Left ventricle myocardium inferior (tissue), 1 donor: ENCODE measurements at regions of chr10 and their contacts with region 1.

Region 1: DNA sequence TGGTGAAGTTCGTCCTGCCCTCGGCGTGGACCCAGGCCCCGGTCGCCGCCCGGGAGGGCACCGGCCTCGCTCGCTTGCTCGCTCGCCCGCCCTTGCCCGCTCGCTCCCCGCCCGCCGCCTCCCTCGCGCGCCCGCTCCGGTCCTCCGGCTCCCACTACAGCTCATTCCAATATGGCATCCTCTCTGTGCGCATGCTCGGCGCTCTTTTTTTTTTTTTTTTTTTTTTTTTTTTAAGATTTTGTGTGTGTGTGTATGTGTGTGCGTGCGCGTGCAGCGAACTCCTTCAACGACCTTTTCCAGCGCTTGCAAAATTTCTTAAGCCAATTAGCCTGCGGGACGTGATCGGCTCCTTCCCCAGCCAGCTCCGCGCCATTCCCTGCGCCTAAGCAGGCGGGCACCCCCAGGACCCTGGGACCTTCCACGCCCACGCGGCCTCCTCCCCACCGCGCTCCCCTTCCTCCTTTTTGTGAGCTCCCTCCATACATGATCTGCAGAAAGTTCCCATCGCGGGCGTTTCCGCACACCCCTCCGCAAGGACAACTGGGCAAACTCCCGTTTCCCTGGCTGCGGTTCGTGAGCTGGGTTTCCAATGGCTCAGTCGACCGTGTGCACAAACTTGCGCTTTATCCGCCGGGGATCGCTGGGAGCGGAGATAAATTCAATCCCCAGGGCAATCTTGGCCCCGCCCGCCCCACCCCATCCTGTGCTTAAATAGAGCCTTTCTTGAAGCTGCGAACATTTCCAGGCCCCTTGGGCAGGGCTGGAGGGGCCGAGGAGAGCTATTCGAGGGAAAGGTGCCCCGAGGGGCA is at the start of gene SFMBT2:
- DNase-seq: peak; percentile 68
- H3K4me3 ChIP-seq: peak within 1 kb of the TSS; percentile 92
- H3K27ac ChIP-seq: peak within 1 kb of the TSS; percentile 87
- H3K4me1 ChIP-seq: peaks cover 65% of the 10 kb centered on the region
- H3K27me3 ChIP-seq: no peaks in the 10 kb centered on the region
- CTCF ChIP-seq: peak; percentile 31
- total RNA-seq, gene SFMBT2: 11.0 TPM

Region 2: DNA sequence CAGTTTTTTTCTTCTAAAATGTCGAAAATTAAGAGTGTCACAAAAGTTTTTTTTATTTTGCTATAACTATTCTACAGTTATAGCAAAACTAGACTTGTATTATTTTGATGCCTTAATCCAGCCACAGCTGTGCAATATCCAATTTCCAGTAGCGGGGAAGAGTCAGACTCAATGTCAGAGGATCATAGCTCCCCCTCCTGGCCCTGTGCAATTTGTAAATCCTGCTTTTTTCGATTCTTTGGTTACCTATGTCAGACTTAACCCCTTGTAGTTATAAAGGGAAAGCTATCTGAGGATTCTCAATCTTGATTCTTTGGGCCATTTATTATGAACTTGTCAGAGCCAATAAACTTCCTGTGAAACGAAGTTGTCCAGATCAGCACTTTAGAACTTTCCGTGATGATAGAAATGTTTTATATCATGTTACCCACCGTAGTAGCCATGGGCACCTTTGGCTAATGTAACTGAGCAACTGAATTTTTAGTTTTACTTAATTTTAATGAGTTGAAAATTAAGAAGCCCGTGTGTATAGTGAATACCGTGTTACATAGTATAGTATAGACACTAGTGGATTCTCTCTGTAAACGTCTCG is 743.3 kb before region 1 on chr10:
- intact Hi-C with region 1: loop called (anchors 10 kb)
- DNase-seq: no peak
- H3K4me3 ChIP-seq: no peak overlapping the region
- H3K27ac ChIP-seq: no peak overlapping the region
- H3K4me1 ChIP-seq: peaks cover 17% of the 10 kb centered on the region
- H3K27me3 ChIP-seq: peaks cover 37% of the 10 kb centered on the region
- CTCF ChIP-seq: peak; percentile 51

Region 3: GRCh38 chr10:6920072-6921019 is 490.7 kb before region 1 on chr10:
- intact Hi-C with region 1: loop called (anchors 10 kb)
- DNase-seq: peak; percentile 55
- H3K4me3 ChIP-seq: no peak overlapping the region
- H3K27ac ChIP-seq: no peak overlapping the region
- H3K4me1 ChIP-seq: peaks cover 5% of the 10 kb centered on the region
- H3K27me3 ChIP-seq: peaks cover 12% of the 10 kb centered on the region
- CTCF ChIP-seq: peak; percentile 69

Region 4: DNA sequence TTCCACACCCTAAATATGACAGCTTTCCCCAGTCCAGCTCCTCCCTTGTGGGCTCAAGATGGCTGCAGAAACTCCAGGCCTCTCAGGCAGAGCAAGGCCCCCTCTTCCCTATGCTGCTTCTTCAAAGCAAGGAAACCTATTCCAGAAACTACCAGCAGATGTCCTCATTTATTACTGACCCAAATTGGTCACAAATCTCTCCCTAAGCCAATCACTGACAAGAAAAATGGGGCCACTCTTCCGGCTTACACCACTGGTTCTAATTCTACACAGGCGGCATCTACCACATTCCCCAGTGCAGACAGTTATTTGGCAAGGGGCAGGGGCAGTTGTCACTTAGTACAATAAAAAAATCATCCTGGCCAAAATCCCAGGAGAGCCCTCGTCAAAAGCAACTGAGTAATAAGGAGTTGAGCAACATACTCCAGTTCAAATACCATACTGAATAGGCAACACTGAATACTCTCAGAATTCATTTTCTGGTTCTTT is 150.6 kb before region 1 on chr10:
- intact Hi-C with region 1: loop called (anchors 5 kb)
- DNase-seq: peak; percentile 56
- H3K4me3 ChIP-seq: no peak overlapping the region
- H3K27ac ChIP-seq: peak overlapping the region; percentile 73
- H3K4me1 ChIP-seq: peaks cover 62% of the 10 kb centered on the region
- H3K27me3 ChIP-seq: no peaks in the 10 kb centered on the region
- CTCF ChIP-seq: peak; percentile 88